Activated naive CD8-positive, alpha-beta T cell treated with anti-CD3 and anti-CD28 coated beads, Interleukin-2, amount 10 ng/mL, durations not matched to agents 7 days and 5 days (primary cell): ENCODE measurements at regions of chr17 and their contacts with region 1.

Region 1: DNA sequence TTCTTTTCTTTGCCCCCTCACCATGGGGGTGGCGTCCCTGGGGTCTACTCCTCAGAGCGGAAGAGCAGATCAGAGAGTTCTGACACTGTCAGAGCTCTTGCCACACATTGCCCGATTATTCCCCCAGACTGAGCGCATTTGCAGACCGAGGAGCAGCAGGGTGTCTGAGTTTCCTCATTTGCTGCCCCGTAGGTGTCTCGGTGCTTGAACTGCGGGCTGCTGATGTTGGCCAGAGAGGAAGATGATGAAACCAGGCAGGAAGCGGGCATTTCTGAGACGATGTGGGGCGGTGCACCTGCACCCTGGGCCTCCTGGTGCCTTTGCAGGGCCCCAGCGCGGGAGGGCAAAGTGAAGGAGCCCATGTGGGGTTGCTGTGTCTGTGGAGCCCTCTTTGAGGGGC is 55.2 kb downstream of the ARSG start:
- DNase-seq: peak; percentile 75
- ATAC-seq: peak; percentile 86
- H3K4me3 Mint-ChIP-seq: peak overlapping the region; percentile 75
- H3K27ac Mint-ChIP-seq: peak overlapping the region; percentile 97
- H3K4me1 Mint-ChIP-seq: peaks cover 69% of the 10 kb centered on the region
- H3K27me3 Mint-ChIP-seq: no peaks in the 10 kb centered on the region

Region 2: DNA sequence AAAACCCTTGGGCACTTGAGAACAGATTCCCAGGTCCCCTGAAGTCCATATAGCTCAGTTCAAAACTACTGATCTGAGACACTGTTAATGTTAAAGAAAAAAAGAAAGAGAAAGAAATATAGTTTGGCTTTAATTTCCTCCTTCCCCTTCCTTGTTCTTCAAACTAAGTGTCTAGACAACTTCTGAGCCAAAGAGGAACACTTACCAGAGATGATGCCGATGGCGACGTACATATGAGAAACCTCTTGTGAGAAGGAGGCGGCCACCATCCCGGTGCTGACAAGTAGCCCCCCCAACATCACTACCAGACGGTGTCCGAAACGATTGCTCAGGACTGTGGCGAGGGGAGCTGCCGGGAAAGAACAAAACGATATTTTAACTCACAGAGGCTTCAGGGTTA is 72.7 kb before region 1 on chr17:
- POLR2A ChIA-PET with region 1: no interaction called
- DNase-seq: no peak
- ATAC-seq: no peak
- H3K4me3 Mint-ChIP-seq: no peak overlapping the region
- H3K27ac Mint-ChIP-seq: no peak overlapping the region
- H3K4me1 Mint-ChIP-seq: no peaks in the 10 kb centered on the region
- H3K27me3 Mint-ChIP-seq: no peaks in the 10 kb centered on the region

Region 3: DNA sequence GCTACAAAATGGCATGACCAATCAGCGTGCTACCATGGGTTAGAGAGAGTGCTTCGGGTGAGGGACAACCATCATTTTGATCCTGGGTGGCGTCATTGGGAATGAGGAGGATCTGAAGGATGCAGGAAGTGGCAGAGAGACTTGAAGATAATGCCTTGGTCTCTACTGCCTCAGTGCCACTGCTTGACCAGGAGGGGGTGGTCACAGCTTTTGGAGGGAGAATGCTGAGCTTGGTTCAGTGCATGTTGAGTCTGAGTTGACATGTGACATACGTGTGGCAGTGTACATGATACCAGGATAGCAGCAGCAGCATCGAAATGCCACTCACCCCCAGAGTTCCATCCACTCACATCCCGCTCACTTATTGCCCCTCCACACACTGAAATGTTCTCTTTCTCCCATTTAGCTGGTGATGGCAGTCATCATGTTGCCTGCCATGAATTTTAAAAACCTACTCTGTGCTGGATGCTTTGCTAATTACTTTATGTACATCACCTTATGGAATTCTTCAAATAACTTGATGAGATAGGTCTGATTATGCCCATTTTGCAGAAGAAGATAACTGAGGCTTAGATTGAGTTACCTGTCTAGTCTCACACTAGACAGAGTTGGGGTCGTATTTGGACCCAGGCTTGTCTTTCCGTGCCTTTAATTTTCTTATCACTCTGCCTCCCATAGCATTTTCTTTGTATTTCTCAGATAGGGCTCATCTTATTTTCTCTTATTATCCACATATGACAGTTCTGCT is 18.5 kb before region 1 on chr17:
- POLR2A ChIA-PET with region 1: no interaction called
- DNase-seq: no peak
- ATAC-seq: no peak
- H3K4me3 Mint-ChIP-seq: no peak overlapping the region
- H3K27ac Mint-ChIP-seq: no peak overlapping the region
- H3K4me1 Mint-ChIP-seq: peaks cover 16% of the 10 kb centered on the region
- H3K27me3 Mint-ChIP-seq: peaks cover 2% of the 10 kb centered on the region

Region 4: GRCh38 chr17:68368387-68368786 is 21.9 kb after region 1 on chr17:
- POLR2A ChIA-PET with region 1: no interaction called
- DNase-seq: no peak
- ATAC-seq: no peak
- H3K4me3 Mint-ChIP-seq: no peak overlapping the region
- H3K27ac Mint-ChIP-seq: no peak overlapping the region
- H3K4me1 Mint-ChIP-seq: peaks cover 10% of the 10 kb centered on the region
- H3K27me3 Mint-ChIP-seq: no peaks in the 10 kb centered on the region

Region 5: DNA sequence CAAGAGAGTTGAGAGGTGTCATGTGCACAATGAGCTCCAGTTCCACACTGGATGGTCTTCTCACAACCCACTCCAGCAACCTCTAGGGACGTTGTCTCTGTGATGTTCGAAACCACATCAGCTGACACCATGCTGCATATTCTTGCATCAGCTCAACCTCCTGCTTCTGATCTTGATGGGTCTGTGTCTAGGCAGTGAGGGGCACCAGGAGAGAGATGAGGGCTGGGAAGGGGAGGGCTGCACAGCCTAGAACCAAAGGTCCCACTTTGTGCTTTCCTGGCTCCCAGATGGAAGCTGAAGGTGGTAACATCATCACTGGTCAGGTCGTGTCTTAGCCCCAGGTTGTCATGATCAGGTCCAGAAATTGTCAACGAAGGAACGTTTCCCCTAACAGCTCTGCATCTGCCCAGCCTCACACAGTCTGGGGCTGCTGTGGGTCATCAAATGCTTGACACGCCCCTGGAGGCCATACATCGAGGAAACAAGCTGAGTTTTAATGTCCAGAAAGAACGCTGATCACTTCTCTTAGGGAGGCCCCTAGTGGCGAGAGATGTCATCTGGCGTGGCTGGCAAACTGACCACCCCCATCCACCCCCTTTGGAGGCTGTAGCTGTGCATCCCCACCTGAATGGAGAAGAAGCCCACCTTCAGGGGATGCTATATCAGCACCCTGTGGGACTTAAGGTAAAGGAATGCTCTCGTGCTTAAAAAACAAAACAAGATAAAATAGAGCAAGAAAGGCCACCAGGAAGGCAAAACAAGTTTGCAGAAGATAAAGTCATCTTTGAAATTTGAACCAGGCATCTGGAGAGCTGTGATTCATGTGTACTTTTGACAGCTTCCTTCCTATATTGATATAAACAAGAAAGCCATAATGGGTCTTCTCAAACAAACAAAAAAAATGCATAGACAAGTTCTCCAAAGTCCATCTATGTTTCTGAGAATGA is 52.5 kb after region 1 on chr17:
- POLR2A ChIA-PET with region 1: interaction called, 10 read pairs
- DNase-seq: peak; percentile 52
- ATAC-seq: peak; percentile 79
- H3K4me3 Mint-ChIP-seq: peak overlapping the region; percentile 65
- H3K27ac Mint-ChIP-seq: peak overlapping the region; percentile 94
- H3K4me1 Mint-ChIP-seq: peaks cover 26% of the 10 kb centered on the region
- H3K27me3 Mint-ChIP-seq: no peaks in the 10 kb centered on the region